ENCODE measurements at regions of chr18 and their contacts with region 1.

Region 1: DNA sequence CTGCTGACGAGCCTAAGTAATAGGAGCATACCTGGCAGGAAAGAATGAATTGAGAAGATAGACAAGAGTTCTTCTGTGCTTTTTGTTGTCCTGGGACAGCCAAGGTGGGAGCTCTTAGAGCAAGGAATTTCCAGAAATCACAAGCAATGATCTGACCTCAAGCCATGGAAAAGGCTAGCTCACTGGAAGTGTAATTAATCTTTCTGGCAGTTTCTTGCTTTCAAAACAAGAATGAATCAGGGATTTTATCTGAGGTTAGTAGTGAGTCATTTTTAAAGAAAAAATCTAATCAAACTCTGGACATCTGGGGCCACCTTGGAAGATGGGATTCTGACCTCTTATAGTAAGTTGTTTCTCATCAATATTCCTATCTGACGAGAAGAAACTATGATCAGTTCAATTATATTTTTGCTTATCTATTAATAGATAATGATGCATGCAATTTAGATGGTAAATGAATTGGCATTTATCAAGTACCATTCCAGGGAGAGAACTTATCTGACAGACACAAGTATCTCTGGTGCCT is 98.0 kb downstream of the ADCYAP1 start:
- DNase-seq: peak in 1 of 4 experiments; percentile 15
- ATAC-seq: no peak
- H3K4me3 ChIP-seq: no peak overlapping the region
- H3K27ac ChIP-seq: peak overlapping the region; percentile 5; the same call in 1 of the 3 replicates
- H3K4me1 ChIP-seq: peaks cover 0 to 27% of the 10 kb centered on the region in 2 experiments; a peak in 3 of 5 replicates
- H3K27me3 ChIP-seq: no peaks in the 10 kb centered on the region
- CTCF ChIP-seq: no peak
- EP300 ChIP-seq: peak; percentile 92
- POLR2A ChIP-seq: no peak
- RAD21 ChIP-seq: peak in 1 of 2 experiments; percentile 30; a peak in 1 of 4 replicates

Region 2: GRCh38 chr18:987325-988186 is 15.2 kb before region 1 on chr18:
- CTCF ChIA-PET with region 1: no interaction called
- POLR2A ChIA-PET with region 1: interaction called, 57 read pairs
- in situ Hi-C with region 1: no loop called
- intact Hi-C with region 1: no loop called
- DNase-seq: peak; percentile 38 to 88 (median 59)
- ATAC-seq: peak; percentile 97
- H3K4me3 ChIP-seq: no peak overlapping the region
- H3K27ac ChIP-seq: peak overlapping the region; percentile 17; the same call in 1 of the 3 replicates
- H3K4me1 ChIP-seq: peaks cover 0 to 13% of the 10 kb centered on the region in 2 experiments; a peak in 3 of 5 replicates
- H3K27me3 ChIP-seq: no peaks in the 10 kb centered on the region
- CTCF ChIP-seq: no peak
- EP300 ChIP-seq: peak; percentile 99
- POLR2A ChIP-seq: no peak
- RAD21 ChIP-seq: peak in 1 of 2 experiments; percentile 25; a peak in 1 of 4 replicates

Region 3: GRCh38 chr18:1062588-1062987 is 59.9 kb after region 1 on chr18:
- CTCF ChIA-PET with region 1: no interaction called
- POLR2A ChIA-PET with region 1: no interaction called
- in situ Hi-C with region 1: no loop called
- intact Hi-C with region 1: loop called (anchors 1 kb)
- DNase-seq: peak in 2 of 4 experiments; percentile 37 to 52
- ATAC-seq: peak; percentile 88
- H3K4me3 ChIP-seq: no peak overlapping the region
- H3K27ac ChIP-seq: no peak overlapping the region
- H3K4me1 ChIP-seq: no peaks in the 10 kb centered on the region
- H3K27me3 ChIP-seq: peaks cover 0 to 6% of the 10 kb centered on the region in 2 experiments; a peak in 1 of 5 replicates
- CTCF ChIP-seq: peak; percentile 61 to 86 (median 74); a peak in 5 of 6 replicates
- EP300 ChIP-seq: peak; percentile 27; the same call in 1 of the 2 replicates
- POLR2A ChIP-seq: no peak
- RAD21 ChIP-seq: peak; percentile 80 to 94

Measured in K562 (cell line).